CD14-positive monocyte (primary cell): ENCODE measurements at regions of chr22 and their contacts with region 1.

Region 1: GRCh38 chr22:35627264-35628041 is 10.3 kb upstream of the MB start:
- DNase-seq: peak in 2 of 3 donors; percentile 28 to 48
- H3K4me3 ChIP-seq: peak overlapping the region; percentile 52 to 82 (median 54)
- H3K4me3 Mint-ChIP-seq: peak overlapping the region; percentile 95 to 97
- H3K27ac ChIP-seq: peak overlapping the region in 1 of 2 donors; percentile 56
- H3K27ac Mint-ChIP-seq: peak overlapping the region; percentile 67 to 90 (median 77)
- H3K4me1 ChIP-seq: peaks cover 16 to 28% of the 10 kb centered on the region in 2 donors
- H3K4me1 Mint-ChIP-seq: peaks cover 33% of the 10 kb centered on the region
- H3K27me3 ChIP-seq: peaks cover 0 to 16% of the 10 kb centered on the region in 2 donors
- H3K27me3 Mint-ChIP-seq: peaks cover 12 to 27% (median 23%) of the 10 kb centered on the region in 3 donors
- CTCF ChIP-seq: peak; percentile 42

Region 2: DNA sequence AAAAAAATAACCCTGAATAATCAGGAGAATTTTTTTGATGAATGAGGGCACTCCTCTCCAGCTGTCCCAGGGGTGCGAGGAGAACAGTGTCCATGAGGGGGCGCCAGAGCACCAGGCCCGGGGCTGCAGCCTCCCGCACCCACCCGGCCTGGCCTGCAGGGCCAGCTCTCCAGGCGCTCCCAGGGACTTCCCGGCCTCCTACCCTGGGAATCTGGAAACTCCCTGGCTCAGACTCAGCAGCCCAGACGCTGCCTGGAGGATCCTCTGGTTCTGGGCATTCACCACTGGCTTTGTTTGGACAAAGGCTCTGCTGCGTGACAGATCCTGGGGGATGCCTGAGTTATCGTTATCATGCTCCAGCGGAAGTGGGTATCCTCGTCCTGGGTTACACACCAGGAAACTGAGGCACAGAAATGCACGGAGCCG is 196.5 kb before region 1 on chr22:
- intact Hi-C with region 1: loop called (anchors 5 to 10 kb)
- DNase-seq: peak; percentile 48 to 76 (median 50)
- H3K4me3 ChIP-seq: no peak overlapping the region
- H3K4me3 Mint-ChIP-seq: no peak overlapping the region
- H3K27ac ChIP-seq: no peak overlapping the region
- H3K27ac Mint-ChIP-seq: peak overlapping the region in 1 of 7 donors; percentile 40
- H3K4me1 ChIP-seq: no peaks in the 10 kb centered on the region
- H3K4me1 Mint-ChIP-seq: no peaks in the 10 kb centered on the region
- H3K27me3 ChIP-seq: no peaks in the 10 kb centered on the region
- H3K27me3 Mint-ChIP-seq: peaks cover 0 to 2% (median 0%) of the 10 kb centered on the region in 3 donors
- CTCF ChIP-seq: peak; percentile 89

Region 3: GRCh38 chr22:35568751-35569725 is 58.4 kb before region 1 on chr22:
- intact Hi-C with region 1: no loop called
- DNase-seq: no peak
- H3K4me3 ChIP-seq: no peak overlapping the region
- H3K4me3 Mint-ChIP-seq: no peak overlapping the region
- H3K27ac ChIP-seq: no peak overlapping the region
- H3K27ac Mint-ChIP-seq: peak overlapping the region in 1 of 7 donors; percentile 39
- H3K4me1 ChIP-seq: no peaks in the 10 kb centered on the region
- H3K4me1 Mint-ChIP-seq: no peaks in the 10 kb centered on the region
- H3K27me3 ChIP-seq: peaks cover 0 to under 1% of the 10 kb centered on the region in 2 donors
- H3K27me3 Mint-ChIP-seq: peaks cover 3% of the 10 kb centered on the region in 3 donors
- CTCF ChIP-seq: no peak

Region 4: GRCh38 chr22:35645646-35646045 is 18.2 kb after region 1 on chr22:
- intact Hi-C with region 1: loop called in 1 of 2 experiments (anchors 1 kb)
- DNase-seq: no peak
- H3K4me3 ChIP-seq: no peak overlapping the region
- H3K4me3 Mint-ChIP-seq: no peak overlapping the region
- H3K27ac ChIP-seq: no peak overlapping the region
- H3K27ac Mint-ChIP-seq: peak overlapping the region in 1 of 7 donors; percentile 94
- H3K4me1 ChIP-seq: peaks cover 30 to 39% of the 10 kb centered on the region in 2 donors
- H3K4me1 Mint-ChIP-seq: peaks cover 37% of the 10 kb centered on the region
- H3K27me3 ChIP-seq: no peaks in the 10 kb centered on the region
- H3K27me3 Mint-ChIP-seq: peaks cover 0 to 1% (median under 1%) of the 10 kb centered on the region in 3 donors
- CTCF ChIP-seq: no peak

Region 5: DNA sequence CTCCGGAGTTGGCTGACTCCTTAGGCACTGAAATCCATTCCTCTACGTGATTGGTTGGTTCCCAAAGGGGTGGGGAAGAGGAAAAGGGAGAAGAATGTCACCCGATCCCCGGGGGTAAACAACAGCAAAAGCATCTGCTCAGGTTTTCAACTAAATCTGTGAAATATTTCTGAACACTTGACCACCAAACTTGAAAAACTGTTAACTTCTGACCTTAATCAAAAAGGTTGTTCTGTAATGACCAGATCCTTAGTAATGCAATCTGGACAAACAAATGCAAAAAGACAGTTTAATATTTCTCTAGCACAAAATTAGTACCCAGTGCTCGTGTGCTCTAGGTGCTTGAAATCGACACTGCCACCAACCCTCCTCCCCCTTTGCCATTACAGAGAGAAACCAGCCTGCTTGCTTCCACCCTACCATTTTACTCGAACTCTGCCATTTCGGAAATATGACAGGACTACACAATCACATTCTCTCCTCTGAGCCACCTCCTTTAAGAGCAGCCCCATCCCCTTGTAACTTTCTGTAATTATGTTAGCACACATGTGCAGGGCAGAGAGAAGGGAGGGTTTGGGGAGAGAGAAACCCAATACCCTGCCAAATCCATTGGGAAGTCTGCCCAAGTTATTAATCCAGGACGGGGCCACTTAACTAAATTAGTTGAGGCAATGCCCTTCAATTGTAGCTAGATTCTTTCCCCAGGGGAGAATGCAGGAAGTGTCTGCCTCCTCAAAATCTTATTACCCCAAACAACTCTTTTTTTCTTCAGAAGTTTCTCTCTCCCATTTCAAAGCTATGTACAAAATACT is 287.4 kb after region 1 on chr22:
- intact Hi-C with region 1: loop called in 1 of 2 experiments (anchors 10 kb)
- DNase-seq: peak; percentile 53 to 58 (median 54)
- H3K4me3 ChIP-seq: peak overlapping the region; percentile 45 to 85 (median 73)
- H3K4me3 Mint-ChIP-seq: peak overlapping the region; percentile 74 to 89
- H3K27ac ChIP-seq: peak overlapping the region in 1 of 2 donors; percentile 51
- H3K27ac Mint-ChIP-seq: peak overlapping the region in 6 of 7 donors; percentile 37 to 90 (median 71)
- H3K4me1 ChIP-seq: peaks cover 23 to 31% of the 10 kb centered on the region in 2 donors
- H3K4me1 Mint-ChIP-seq: peaks cover 39% of the 10 kb centered on the region
- H3K27me3 ChIP-seq: no peaks in the 10 kb centered on the region
- H3K27me3 Mint-ChIP-seq: peaks cover 0 to 2% (median 1%) of the 10 kb centered on the region in 3 donors
- CTCF ChIP-seq: no peak